A673 (cell line): ENCODE measurements at regions of chr3 and their contacts with region 1.

Region 1: GRCh38 chr3:177359593-177360357 is 162.5 kb upstream of the TBL1XR1 start:
- DNase-seq: peak; percentile 99
- H3K4me3 ChIP-seq: peak overlapping the region; percentile 31
- H3K27ac ChIP-seq: peak overlapping the region; percentile 83
- H3K4me1 ChIP-seq: peaks cover 46% of the 10 kb centered on the region
- H3K27me3 ChIP-seq: no peaks in the 10 kb centered on the region
- CTCF ChIP-seq: 0 out of 2 replicates have a peak, but pooled peaks have one; percentile 15

Region 2: GRCh38 chr3:177069514-177070329 is 290.1 kb before region 1 on chr3:
- CTCF ChIA-PET with region 1: no interaction called
- POLR2A ChIA-PET with region 1: no interaction called
- intact Hi-C with region 1: loop called (anchors 2 kb)
- DNase-seq: peak; percentile 94
- H3K4me3 ChIP-seq: no peak overlapping the region
- H3K27ac ChIP-seq: peak overlapping the region; percentile 96
- H3K4me1 ChIP-seq: peaks cover 80% of the 10 kb centered on the region
- H3K27me3 ChIP-seq: no peaks in the 10 kb centered on the region
- CTCF ChIP-seq: no peak

Region 3: DNA sequence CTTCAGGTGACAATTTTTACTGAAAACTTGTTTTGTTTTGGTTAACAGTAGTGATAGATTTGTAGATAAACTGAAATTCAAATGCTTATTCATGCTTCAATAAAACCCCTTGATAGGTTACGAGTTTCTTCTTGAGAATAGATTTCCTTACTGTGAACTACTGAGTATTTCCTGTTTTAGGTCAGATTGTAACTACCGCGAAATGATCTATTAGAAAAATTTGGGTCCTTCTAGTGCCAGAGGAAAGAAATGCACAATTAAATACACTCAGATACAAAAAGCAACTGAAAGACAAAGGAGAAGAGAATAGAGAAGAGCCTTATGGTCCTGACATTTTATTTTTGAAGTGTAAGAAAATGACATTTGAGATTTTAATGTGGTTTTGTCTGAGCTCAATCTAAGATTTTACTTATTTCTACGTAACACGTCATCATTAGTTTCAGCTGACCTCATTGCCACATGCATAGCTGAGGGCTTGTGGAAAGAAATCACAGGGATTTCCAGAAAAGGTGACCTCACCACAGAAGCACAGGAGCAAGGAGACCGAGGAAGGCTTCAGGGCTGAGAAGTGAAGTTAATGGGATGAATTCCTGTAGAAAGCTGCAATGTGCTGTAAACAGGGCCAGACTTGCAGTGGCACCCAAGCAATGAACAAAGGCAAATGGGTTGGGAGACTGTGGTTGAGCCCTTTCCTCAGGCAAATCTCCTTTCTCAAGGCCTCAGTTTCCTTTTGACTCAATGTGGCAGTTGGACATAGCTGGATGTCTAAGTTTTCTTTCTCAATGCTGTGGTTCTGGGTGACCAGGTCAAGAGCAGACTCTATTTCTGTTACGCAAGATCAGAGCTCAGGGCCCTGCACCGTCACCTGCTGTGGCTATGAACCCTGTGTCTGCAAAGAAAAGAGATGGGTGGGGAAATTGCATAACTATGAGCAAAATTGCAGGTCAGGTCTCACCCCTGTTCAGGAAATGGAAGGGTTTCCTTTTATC is 89.5 kb after region 1 on chr3:
- CTCF ChIA-PET with region 1: no interaction called
- POLR2A ChIA-PET with region 1: interaction called, 14 read pairs
- intact Hi-C with region 1: loop called (anchors 5 kb)
- DNase-seq: peak; percentile 64
- H3K4me3 ChIP-seq: no peak overlapping the region
- H3K27ac ChIP-seq: peak overlapping the region; percentile 71
- H3K4me1 ChIP-seq: peaks cover 64% of the 10 kb centered on the region
- H3K27me3 ChIP-seq: no peaks in the 10 kb centered on the region
- CTCF ChIP-seq: no peak

Region 4: GRCh38 chr3:177862962-177863491 is 503.3 kb after region 1 on chr3:
- CTCF ChIA-PET with region 1: no interaction called
- POLR2A ChIA-PET with region 1: no interaction called
- intact Hi-C with region 1: no loop called
- DNase-seq: no peak
- H3K4me3 ChIP-seq: no peak overlapping the region
- H3K27ac ChIP-seq: no peak overlapping the region
- H3K4me1 ChIP-seq: no peaks in the 10 kb centered on the region
- H3K27me3 ChIP-seq: no peaks in the 10 kb centered on the region
- CTCF ChIP-seq: no peak

Region 5: DNA sequence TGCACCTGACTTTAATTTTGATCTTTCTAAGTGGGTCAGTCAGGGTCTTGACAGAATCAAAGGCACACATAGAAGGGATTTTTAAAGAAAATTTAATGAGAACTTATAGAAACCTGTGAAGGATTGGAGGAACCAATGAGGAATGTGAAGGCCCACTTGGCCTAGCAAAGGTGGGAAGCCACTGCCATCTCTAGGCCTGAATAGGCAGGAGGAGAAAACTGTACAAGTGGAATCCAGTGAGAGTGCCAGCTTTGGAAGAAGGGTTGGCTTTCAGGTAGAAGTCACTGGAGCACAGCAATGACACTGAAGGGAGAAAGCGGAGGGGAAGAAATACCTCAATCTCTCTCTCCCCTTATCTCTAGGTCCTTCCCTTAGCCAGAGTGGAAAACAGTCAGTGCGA is 795.7 kb after region 1 on chr3:
- CTCF ChIA-PET with region 1: no interaction called
- POLR2A ChIA-PET with region 1: no interaction called
- intact Hi-C with region 1: loop called (anchors 10 kb)
- DNase-seq: no peak
- H3K4me3 ChIP-seq: no peak overlapping the region
- H3K27ac ChIP-seq: no peak overlapping the region
- H3K4me1 ChIP-seq: peaks cover 6% of the 10 kb centered on the region
- H3K27me3 ChIP-seq: no peaks in the 10 kb centered on the region
- CTCF ChIP-seq: peak; percentile 36; the same call in 1 of the 2 replicates

Region 6: GRCh38 chr3:178385280-178385952 is 1025.6 kb after region 1 on chr3:
- CTCF ChIA-PET with region 1: no interaction called
- POLR2A ChIA-PET with region 1: no interaction called
- intact Hi-C with region 1: loop called (anchors 10 kb)
- DNase-seq: peak; percentile 64
- H3K4me3 ChIP-seq: no peak overlapping the region
- H3K27ac ChIP-seq: no peak overlapping the region
- H3K4me1 ChIP-seq: peaks cover 14% of the 10 kb centered on the region
- H3K27me3 ChIP-seq: no peaks in the 10 kb centered on the region
- CTCF ChIP-seq: peak; percentile 92